Tibial artery (tissue), 4 donors: ENCODE measurements at regions of chr6 and their contacts with region 1.

Region 1: DNA sequence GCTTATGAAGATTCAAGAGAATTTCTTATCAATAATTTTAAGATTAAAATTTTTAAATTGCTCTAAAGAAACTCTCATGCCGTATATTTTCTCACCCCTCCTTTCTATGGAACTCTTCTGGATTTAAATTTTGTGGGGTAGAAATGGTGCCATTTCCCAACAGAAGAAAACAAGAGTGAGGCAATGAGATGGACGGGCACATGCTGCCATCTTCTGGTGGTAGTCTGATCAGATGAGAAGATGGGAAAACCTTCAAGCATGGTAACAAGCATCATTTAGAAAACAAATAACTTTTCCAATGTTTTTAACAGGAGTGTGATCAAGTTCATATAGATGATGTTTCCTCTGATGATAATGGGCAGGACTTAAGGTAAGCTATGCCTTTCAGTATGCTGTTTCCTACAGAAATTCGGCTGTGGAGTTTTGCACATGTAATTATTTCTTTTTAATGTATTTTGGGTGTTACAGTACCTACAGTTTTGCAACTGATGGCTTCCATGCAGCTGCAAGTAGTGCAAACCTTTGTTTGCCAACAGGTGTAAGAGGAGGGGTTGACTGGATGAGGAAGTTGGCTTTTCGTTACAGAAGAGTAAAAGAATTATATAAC is 271.4 kb downstream of the EYA4 start:
- DNase-seq: peak in 1 of 2 donors; percentile 24
- H3K4me3 ChIP-seq: no peak overlapping the region
- H3K27ac ChIP-seq: no peak overlapping the region
- H3K4me1 ChIP-seq: no peaks in the 10 kb centered on the region
- H3K27me3 ChIP-seq: no peaks in the 10 kb centered on the region
- CTCF ChIP-seq: peak; percentile 66 to 71

Region 2: GRCh38 chr6:132820629-132821381 is 691.7 kb before region 1 on chr6:
- intact Hi-C with region 1: loop called (anchors 10 kb)
- DNase-seq: no peak
- H3K4me3 ChIP-seq: no peak overlapping the region
- H3K27ac ChIP-seq: peak overlapping the region in 1 of 2 donors; percentile 18
- H3K4me1 ChIP-seq: peaks cover 0 to 24% (median 14%) of the 10 kb centered on the region in 4 donors
- H3K27me3 ChIP-seq: no peaks in the 10 kb centered on the region
- CTCF ChIP-seq: no peak

Region 3: GRCh38 chr6:133184798-133185372 is 327.6 kb before region 1 on chr6:
- intact Hi-C with region 1: loop called (anchors 5 kb)
- DNase-seq: no peak
- H3K4me3 ChIP-seq: no peak overlapping the region
- H3K27ac ChIP-seq: no peak overlapping the region
- H3K4me1 ChIP-seq: no peaks in the 10 kb centered on the region
- H3K27me3 ChIP-seq: no peaks in the 10 kb centered on the region
- CTCF ChIP-seq: peak; percentile 41 to 57

Region 4: DNA sequence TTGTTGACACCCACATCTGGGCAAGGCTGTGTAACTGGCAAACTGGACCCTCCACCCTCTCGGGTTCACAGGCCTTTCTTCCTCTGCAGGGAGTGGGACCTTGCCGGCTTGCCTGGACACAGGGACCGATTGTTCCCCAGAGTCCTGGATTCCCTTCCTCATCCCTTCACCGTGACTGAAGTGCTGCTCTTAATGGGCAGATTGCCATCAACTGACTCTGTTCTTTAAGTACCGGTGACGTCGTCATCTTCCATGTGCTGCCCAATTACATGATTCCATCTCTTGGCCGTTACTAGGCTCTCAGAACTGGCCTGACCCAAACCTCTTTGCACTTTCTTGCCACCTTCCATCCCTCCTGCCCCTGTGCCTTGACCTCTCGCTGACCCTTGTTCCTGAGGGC is 185.9 kb before region 1 on chr6:
- intact Hi-C with region 1: no loop called
- DNase-seq: no peak
- H3K4me3 ChIP-seq: no peak overlapping the region
- H3K27ac ChIP-seq: no peak overlapping the region
- H3K4me1 ChIP-seq: no peaks in the 10 kb centered on the region
- H3K27me3 ChIP-seq: no peaks in the 10 kb centered on the region
- CTCF ChIP-seq: no peak